ENCODE measurements at regions of chr14 and their contacts with region 1.

Region 1: DNA sequence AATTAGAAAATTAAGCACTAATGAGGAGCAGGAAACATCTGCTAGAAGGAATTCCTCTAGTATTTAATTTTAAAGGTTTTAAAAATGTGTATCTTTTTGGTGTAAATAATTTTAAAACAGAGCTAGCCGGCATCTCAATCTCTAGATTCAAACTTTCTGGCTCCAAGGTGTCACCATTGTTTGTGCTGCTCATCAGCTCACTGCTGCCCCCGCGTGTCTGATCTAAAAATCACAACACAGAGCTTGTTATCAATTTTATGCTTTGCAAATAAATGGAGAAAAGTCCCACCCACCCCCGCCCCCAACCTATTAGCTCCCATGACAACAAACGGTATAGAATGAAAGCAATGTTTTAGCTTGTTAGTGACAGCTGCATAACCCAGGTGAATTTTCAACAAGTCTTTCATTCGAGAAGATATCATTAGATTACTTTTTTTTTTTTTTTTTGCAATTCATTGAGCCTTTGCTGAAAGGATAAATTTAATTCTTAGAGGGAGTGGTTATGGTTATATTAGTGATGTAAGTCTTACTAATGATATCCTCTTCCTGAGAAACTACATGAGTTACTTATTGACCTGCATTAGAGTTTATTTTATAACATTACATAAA is 11.3 kb upstream of the ABHD12B start:
- DNase-seq: peak; percentile 80 to 90 (median 86)
- ATAC-seq: peak; percentile 90
- H3K4me3 ChIP-seq: peak overlapping the region; percentile 84
- H3K4me3 Mint-ChIP-seq: peak overlapping the region; percentile 89 to 95 (median 92)
- H3K27ac ChIP-seq: peak overlapping the region; percentile 56
- H3K27ac Mint-ChIP-seq: peak overlapping the region; percentile 83 to 95 (median 88)
- H3K4me1 ChIP-seq: peaks cover 7% of the 10 kb centered on the region in 2 donors
- H3K4me1 Mint-ChIP-seq: peaks cover 3 to 23% (median 11%) of the 10 kb centered on the region in 7 donors
- H3K27me3 ChIP-seq: no peaks in the 10 kb centered on the region
- H3K27me3 Mint-ChIP-seq: peaks cover 0 to 33% (median 2%) of the 10 kb centered on the region in 5 donors

Region 2: GRCh38 chr14:49754570-49755097 is 1105.9 kb before region 1 on chr14:
- CTCF ChIA-PET with region 1: no interaction called
- POLR2A ChIA-PET with region 1: no interaction called
- intact Hi-C with region 1: no loop called
- DNase-seq: no peak
- ATAC-seq: no peak
- H3K4me3 ChIP-seq: no peak overlapping the region
- H3K4me3 Mint-ChIP-seq: no peak overlapping the region
- H3K27ac ChIP-seq: no peak overlapping the region
- H3K27ac Mint-ChIP-seq: peak overlapping the region in 1 of 9 donors; percentile 41
- H3K4me1 ChIP-seq: no peaks in the 10 kb centered on the region
- H3K4me1 Mint-ChIP-seq: peaks cover 0 to 2% (median 0%) of the 10 kb centered on the region in 7 donors
- H3K27me3 ChIP-seq: no peaks in the 10 kb centered on the region
- H3K27me3 Mint-ChIP-seq: peaks cover 0 to 18% (median 0%) of the 10 kb centered on the region in 5 donors

Region 3: GRCh38 chr14:50342221-50343078 is 518.1 kb before region 1 on chr14:
- CTCF ChIA-PET with region 1: no interaction called
- POLR2A ChIA-PET with region 1: no interaction called
- intact Hi-C with region 1: loop called in 1 of 2 experiments (anchors 1 kb)
- DNase-seq: peak in 7 of 9 donors; percentile 22 to 59 (median 39)
- ATAC-seq: peak; percentile 83
- H3K4me3 ChIP-seq: no peak overlapping the region
- H3K4me3 Mint-ChIP-seq: peak overlapping the region in 1 of 10 donors; percentile 59
- H3K27ac ChIP-seq: no peak overlapping the region
- H3K27ac Mint-ChIP-seq: peak overlapping the region in 2 of 9 donors; percentile 31 to 66
- H3K4me1 ChIP-seq: no peaks in the 10 kb centered on the region
- H3K4me1 Mint-ChIP-seq: peaks cover 0 to 23% (median 16%) of the 10 kb centered on the region in 7 donors
- H3K27me3 ChIP-seq: no peaks in the 10 kb centered on the region
- H3K27me3 Mint-ChIP-seq: peaks cover 0 to 11% (median 0%) of the 10 kb centered on the region in 5 donors

Region 4: DNA sequence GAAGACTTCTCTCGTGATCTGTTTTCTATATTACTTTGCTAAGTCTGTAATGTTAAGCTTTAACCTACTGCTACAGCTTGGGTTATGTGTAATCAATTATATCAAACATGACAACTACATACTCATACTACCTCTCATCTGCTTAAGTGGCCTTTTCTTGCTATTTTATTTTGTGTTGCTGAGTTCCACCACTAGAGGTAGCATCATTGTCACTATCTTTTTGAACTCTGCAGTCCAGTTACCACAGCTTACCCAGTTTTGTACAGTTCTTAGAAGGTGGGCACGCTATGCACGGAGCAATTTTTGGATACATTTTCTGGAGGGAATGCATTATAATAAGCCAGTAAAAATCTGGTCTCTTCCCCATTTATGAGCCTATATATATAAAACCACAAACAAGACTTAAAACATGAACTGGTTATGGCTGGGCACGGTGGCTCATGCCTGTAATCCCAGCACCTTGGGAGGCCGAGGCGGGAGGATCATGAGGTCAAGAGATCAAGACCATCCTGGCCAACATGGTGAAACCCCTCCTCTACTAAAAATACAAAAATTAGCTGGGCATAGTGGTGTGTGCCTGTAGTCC is 240.9 kb before region 1 on chr14:
- CTCF ChIA-PET with region 1: no interaction called
- POLR2A ChIA-PET with region 1: interaction called, 3 read pairs
- intact Hi-C with region 1: loop called (anchors 1 to 2 kb)
- DNase-seq: peak in 3 of 9 donors; percentile 7 to 11 (median 7)
- ATAC-seq: peak; percentile 41
- H3K4me3 ChIP-seq: no peak overlapping the region
- H3K4me3 Mint-ChIP-seq: no peak overlapping the region
- H3K27ac ChIP-seq: no peak overlapping the region
- H3K27ac Mint-ChIP-seq: no peak overlapping the region
- H3K4me1 ChIP-seq: no peaks in the 10 kb centered on the region
- H3K4me1 Mint-ChIP-seq: no peaks in the 10 kb centered on the region
- H3K27me3 ChIP-seq: no peaks in the 10 kb centered on the region
- H3K27me3 Mint-ChIP-seq: no peaks in the 10 kb centered on the region

Region 5: GRCh38 chr14:50714450-50715073 is 146.0 kb before region 1 on chr14:
- CTCF ChIA-PET with region 1: no interaction called
- POLR2A ChIA-PET with region 1: no interaction called
- intact Hi-C with region 1: no loop called
- DNase-seq: peak in 3 of 9 donors; percentile 12 to 23 (median 20)
- ATAC-seq: peak; percentile 73
- H3K4me3 ChIP-seq: no peak overlapping the region
- H3K4me3 Mint-ChIP-seq: no peak overlapping the region
- H3K27ac ChIP-seq: no peak overlapping the region
- H3K27ac Mint-ChIP-seq: no peak overlapping the region
- H3K4me1 ChIP-seq: no peaks in the 10 kb centered on the region
- H3K4me1 Mint-ChIP-seq: no peaks in the 10 kb centered on the region
- H3K27me3 ChIP-seq: no peaks in the 10 kb centered on the region
- H3K27me3 Mint-ChIP-seq: peaks cover 0 to 6% (median 4%) of the 10 kb centered on the region in 5 donors

Region 6: DNA sequence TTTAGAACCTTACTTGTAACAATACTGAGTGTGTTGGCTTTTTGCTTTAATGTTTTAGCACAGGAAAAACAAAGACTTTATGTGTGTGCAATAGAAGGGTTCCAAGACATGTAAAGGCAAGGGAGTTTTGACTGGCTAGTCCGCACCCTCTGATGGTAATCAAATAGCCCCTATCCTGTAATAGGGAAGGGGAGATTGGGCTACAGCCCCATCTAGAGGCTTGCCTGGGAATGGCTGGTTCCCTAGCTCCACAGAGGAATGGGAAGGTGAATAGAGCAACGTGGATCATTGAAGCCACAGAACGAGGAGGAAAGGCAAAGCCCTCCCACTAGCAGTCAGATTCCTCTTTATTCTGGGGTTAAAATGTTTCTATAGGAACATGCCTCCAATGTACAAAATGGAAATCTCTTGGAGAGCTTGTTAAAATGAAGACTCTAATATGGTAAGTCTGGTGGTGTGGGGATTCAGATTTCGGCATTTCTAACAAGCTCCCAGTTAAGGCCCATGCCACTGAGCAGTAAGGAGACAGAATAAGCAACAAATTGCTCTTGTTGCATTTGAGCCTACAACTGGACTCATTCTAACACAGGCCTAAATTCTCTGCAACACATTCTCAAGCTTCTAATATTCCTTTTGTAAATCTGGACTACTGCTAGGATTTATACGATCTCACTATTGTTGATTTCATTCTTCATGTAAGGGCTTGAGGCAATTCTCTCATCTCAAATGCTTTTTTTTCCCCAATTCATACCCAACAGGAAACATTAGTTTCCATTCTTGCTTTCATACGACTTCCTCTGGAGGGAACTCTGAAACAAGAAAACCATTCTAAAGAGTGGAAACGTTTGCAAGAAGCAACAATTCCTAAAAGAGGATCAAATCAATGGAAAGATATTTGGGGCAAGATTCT is 86.7 kb before region 1 on chr14:
- CTCF ChIA-PET with region 1: interaction called, 110 read pairs
- POLR2A ChIA-PET with region 1: interaction called, 22 read pairs
- intact Hi-C with region 1: loop called (anchors 1 kb)
- DNase-seq: peak in 1 of 9 donors; percentile 38
- ATAC-seq: peak; percentile 65
- H3K4me3 ChIP-seq: no peak overlapping the region
- H3K4me3 Mint-ChIP-seq: peak overlapping the region in 3 of 10 donors; percentile 1 to 27 (median 18)
- H3K27ac ChIP-seq: no peak overlapping the region
- H3K27ac Mint-ChIP-seq: peak overlapping the region in 8 of 9 donors; percentile 1 to 78 (median 37)
- H3K4me1 ChIP-seq: peaks cover 9 to 13% of the 10 kb centered on the region in 2 donors
- H3K4me1 Mint-ChIP-seq: peaks cover 17 to 41% (median 28%) of the 10 kb centered on the region in 7 donors
- H3K27me3 ChIP-seq: no peaks in the 10 kb centered on the region
- H3K27me3 Mint-ChIP-seq: no peaks in the 10 kb centered on the region

Region 7: DNA sequence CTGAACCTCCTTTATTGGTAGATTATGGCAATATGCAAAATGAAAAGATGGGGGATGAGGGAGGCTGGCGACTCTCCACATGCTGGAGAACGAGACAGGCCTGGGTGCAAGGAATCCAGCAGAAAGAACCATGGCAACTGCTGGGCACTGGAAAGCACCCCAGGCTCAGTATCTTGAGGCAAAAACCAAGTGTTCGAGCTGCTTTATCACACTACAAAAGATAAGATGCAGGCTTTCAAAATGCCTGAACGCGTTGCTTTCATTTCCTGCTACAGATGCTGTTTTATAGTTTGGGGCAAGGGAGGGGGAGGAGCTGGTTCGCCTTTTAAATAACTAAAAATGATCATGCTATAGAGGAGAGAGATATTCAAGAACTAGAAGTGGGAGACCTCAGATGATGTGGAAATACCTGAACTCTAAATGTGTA is 68.5 kb before region 1 on chr14:
- CTCF ChIA-PET with region 1: interaction called, 85 read pairs
- POLR2A ChIA-PET with region 1: interaction called, 18 read pairs
- intact Hi-C with region 1: loop called in 1 of 2 experiments (anchors 2 kb)
- DNase-seq: peak in 7 of 9 donors; percentile 35 to 56 (median 41)
- ATAC-seq: peak; percentile 72
- H3K4me3 ChIP-seq: peak overlapping the region; percentile 56
- H3K4me3 Mint-ChIP-seq: peak overlapping the region; percentile 67 to 89 (median 82)
- H3K27ac ChIP-seq: peak overlapping the region; percentile 71
- H3K27ac Mint-ChIP-seq: peak overlapping the region; percentile 91 to 99 (median 96)
- H3K4me1 ChIP-seq: peaks cover 53 to 69% of the 10 kb centered on the region in 2 donors
- H3K4me1 Mint-ChIP-seq: peaks cover 42 to 100% (median 91%) of the 10 kb centered on the region in 7 donors
- H3K27me3 ChIP-seq: no peaks in the 10 kb centered on the region
- H3K27me3 Mint-ChIP-seq: no peaks in the 10 kb centered on the region

Region 8: DNA sequence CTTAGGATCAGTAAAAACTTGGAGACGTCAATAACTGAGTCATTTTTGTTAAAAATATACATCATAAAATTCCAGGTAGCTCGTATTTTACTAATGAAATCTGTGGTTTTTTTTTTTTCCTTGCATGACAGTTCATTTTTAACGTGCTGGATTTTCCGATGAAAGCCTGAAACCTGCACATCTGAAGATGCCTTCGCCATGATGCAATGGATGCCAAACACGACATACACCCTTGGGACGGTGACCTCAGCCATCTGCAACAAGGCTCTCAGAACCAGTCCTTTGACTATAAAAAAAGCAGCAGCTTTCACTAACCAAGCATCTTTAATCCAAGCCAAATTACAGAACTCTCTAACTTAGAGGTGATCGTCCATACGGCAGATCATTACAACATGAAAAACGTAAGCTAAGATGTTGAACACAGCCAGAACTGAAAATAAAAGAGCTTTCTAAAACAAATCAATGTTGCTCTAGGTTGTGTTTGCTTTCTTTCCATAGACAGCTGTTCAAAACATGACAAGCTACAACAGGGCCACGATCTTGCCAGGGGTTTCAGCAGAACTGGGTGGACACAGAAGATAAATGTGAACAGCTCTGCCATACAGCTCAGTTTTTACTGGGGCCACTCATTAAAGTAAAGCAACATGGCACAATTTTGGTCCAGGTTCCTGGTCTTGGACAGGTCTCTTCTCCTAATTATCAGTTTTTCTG is 37.4 kb before region 1 on chr14:
- CTCF ChIA-PET with region 1: interaction called, 31 read pairs
- POLR2A ChIA-PET with region 1: interaction called, 29 read pairs
- intact Hi-C with region 1: loop called (anchors 1 to 10 kb)
- DNase-seq: peak in 4 of 9 donors; percentile 13 to 26 (median 20)
- ATAC-seq: peak; percentile 14
- H3K4me3 ChIP-seq: peak overlapping the region; percentile 48
- H3K4me3 Mint-ChIP-seq: peak overlapping the region; percentile 51 to 85 (median 80)
- H3K27ac ChIP-seq: peak overlapping the region; percentile 69
- H3K27ac Mint-ChIP-seq: peak overlapping the region; percentile 89 to 97 (median 92)
- H3K4me1 ChIP-seq: peaks cover 85 to 87% of the 10 kb centered on the region in 2 donors
- H3K4me1 Mint-ChIP-seq: peaks cover 74 to 97% (median 92%) of the 10 kb centered on the region in 7 donors
- H3K27me3 ChIP-seq: no peaks in the 10 kb centered on the region
- H3K27me3 Mint-ChIP-seq: no peaks in the 10 kb centered on the region

Region 9: GRCh38 chr14:50882953-50883826 is 22.6 kb after region 1 on chr14:
- CTCF ChIA-PET with region 1: no interaction called
- POLR2A ChIA-PET with region 1: no interaction called
- intact Hi-C with region 1: no loop called
- DNase-seq: no peak
- ATAC-seq: no peak
- H3K4me3 ChIP-seq: no peak overlapping the region
- H3K4me3 Mint-ChIP-seq: no peak overlapping the region
- H3K27ac ChIP-seq: no peak overlapping the region
- H3K27ac Mint-ChIP-seq: no peak overlapping the region
- H3K4me1 ChIP-seq: no peaks in the 10 kb centered on the region
- H3K4me1 Mint-ChIP-seq: no peaks in the 10 kb centered on the region
- H3K27me3 ChIP-seq: no peaks in the 10 kb centered on the region
- H3K27me3 Mint-ChIP-seq: peaks cover 21 to 59% (median 29%) of the 10 kb centered on the region in 5 donors

Measured in naive thymus-derived CD4-positive, alpha-beta T cell (primary cell).